ENCODE measurements at regions of chr2 and their contacts with region 1.

Region 1: DNA sequence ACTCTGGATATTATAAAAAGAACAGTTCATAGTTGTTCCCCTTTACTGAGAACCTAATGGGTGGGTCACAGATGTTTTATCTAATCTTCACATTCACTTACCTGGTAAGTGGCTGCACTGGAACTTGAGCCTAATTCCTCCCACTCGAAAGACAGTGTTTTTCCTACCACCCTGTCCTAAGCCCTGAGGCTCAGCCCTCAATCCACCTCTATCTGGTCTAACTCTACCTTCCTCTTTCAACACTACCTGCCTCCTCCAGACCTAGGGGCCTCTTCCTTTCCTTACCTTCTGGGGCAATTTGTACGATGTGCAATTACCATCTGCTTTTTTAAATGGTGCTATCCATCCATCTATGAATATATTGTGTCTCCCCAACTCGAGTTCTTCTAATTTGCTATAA is 9.7 kb upstream of the KIF3C start:
- DNase-seq: no peak
- ATAC-seq: no peak
- H3K4me3 Mint-ChIP-seq: no peak overlapping the region
- H3K27ac Mint-ChIP-seq: no peak overlapping the region
- H3K4me1 Mint-ChIP-seq: peaks cover 6% of the 10 kb centered on the region
- H3K27me3 Mint-ChIP-seq: no peaks in the 10 kb centered on the region
- CTCF ChIP-seq: no peak

Region 2: DNA sequence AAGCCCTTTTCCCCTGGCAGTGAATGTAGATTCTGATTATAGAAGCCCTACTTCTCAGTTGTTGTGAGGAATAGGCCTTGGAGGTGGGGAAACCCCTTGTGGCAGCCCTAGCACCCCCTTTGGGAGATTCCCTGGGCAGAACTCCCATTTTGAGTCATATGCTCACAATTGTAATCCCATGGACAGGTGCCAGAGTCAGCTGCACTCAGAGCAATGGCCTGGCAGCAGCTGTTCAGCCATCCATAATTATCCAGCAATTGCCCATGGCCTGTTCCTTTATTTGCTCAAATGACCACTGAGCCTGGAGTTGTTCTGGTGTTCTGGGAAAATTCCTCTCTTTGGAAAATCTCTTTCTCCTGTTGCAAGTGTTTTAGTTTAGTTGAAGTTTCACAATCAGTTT is 1270.5 kb before region 1 on chr2:
- CTCF ChIA-PET with region 1: no interaction called
- POLR2A ChIA-PET with region 1: interaction called, 11 read pairs
- intact Hi-C with region 1: no loop called
- DNase-seq: no peak
- ATAC-seq: no peak
- H3K4me3 Mint-ChIP-seq: no peak overlapping the region
- H3K27ac Mint-ChIP-seq: no peak overlapping the region
- H3K4me1 Mint-ChIP-seq: peaks cover 29% of the 10 kb centered on the region
- H3K27me3 Mint-ChIP-seq: no peaks in the 10 kb centered on the region
- CTCF ChIP-seq: no peak

Region 3: DNA sequence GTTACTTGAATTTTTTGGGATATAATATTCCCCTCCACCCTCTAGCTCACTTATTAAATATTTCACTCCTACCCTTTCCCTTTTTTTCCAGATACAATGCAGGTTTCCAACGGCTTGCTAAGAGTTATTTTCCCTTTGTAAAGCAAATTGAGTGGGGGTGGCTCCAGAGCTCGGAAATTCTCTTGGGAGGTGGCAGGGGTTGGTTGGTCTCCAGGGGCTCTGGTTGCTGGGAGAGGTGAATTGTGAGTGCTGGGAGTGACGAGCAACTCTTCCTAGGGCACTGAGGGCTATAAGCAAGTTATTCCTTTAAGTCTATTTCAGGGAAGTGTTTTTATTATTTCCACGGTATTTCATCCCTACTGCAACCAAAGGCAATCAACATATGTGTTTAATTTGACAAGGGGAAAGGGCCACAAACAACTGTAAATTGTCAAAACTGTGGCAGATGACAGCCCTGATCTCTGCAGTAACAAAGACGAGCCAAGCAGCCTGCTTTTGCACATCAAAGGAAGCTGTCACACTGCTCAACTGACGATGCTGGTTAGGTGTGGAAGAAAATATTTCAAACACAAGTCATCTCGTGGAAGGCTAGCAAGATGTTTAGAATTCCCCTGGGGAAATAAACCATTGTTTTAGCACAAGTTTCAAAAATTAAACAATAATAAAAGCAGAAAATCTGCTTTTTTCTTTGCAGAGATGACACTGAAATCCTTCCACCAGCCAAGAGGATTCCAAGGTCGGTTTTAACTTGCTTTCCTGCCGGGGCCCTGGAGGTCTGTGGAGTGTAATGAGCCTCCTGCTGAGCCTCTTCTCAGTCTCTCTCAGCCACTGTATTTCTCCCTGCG is 78.9 kb before region 1 on chr2:
- CTCF ChIA-PET with region 1: no interaction called
- POLR2A ChIA-PET with region 1: no interaction called
- intact Hi-C with region 1: no loop called
- DNase-seq: no peak
- ATAC-seq: no peak
- H3K4me3 Mint-ChIP-seq: no peak overlapping the region
- H3K27ac Mint-ChIP-seq: no peak overlapping the region
- H3K4me1 Mint-ChIP-seq: peaks cover 7% of the 10 kb centered on the region
- H3K27me3 Mint-ChIP-seq: peaks cover 4% of the 10 kb centered on the region
- CTCF ChIP-seq: no peak

Region 4: GRCh38 chr2:25941042-25941441 is 50.9 kb before region 1 on chr2:
- CTCF ChIA-PET with region 1: no interaction called
- POLR2A ChIA-PET with region 1: no interaction called
- intact Hi-C with region 1: no loop called
- DNase-seq: no peak
- ATAC-seq: no peak
- H3K4me3 Mint-ChIP-seq: no peak overlapping the region
- H3K27ac Mint-ChIP-seq: no peak overlapping the region
- H3K4me1 Mint-ChIP-seq: no peaks in the 10 kb centered on the region
- H3K27me3 Mint-ChIP-seq: no peaks in the 10 kb centered on the region
- CTCF ChIP-seq: no peak

Region 5: DNA sequence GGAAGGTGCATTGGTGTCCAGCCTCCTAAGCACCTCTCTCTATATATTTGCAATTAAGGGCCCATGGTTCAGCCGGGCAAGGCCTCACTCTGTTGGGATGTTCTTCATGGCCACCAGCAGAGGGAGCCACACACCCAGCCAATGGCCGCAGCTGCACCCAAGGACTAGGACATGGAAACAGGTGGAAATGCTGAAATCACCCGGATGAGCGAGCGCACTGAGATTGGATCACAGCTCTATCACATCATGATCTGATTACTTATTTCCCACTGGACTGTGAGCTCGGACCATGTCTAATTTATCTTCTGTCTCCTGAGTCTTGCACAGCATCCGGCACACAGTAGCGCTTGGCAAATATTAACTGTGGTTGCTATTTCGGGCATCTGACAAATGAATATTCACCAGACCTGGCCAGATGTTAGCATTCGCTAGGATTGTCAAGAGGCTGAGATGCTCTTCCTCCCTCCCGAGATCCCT is 40.9 kb before region 1 on chr2:
- CTCF ChIA-PET with region 1: interaction called, 8 read pairs
- POLR2A ChIA-PET with region 1: no interaction called
- intact Hi-C with region 1: loop called (anchors 2 kb)
- DNase-seq: peak; percentile 51
- ATAC-seq: peak; percentile 86
- H3K4me3 Mint-ChIP-seq: no peak overlapping the region
- H3K27ac Mint-ChIP-seq: no peak overlapping the region
- H3K4me1 Mint-ChIP-seq: no peaks in the 10 kb centered on the region
- H3K27me3 Mint-ChIP-seq: no peaks in the 10 kb centered on the region
- CTCF ChIP-seq: peak; percentile 68

Region 6: GRCh38 chr2:26144953-26145680 is 153.2 kb after region 1 on chr2:
- CTCF ChIA-PET with region 1: interaction called, 24 read pairs
- POLR2A ChIA-PET with region 1: interaction called, 3 read pairs
- intact Hi-C with region 1: loop called (anchors 1 kb)
- DNase-seq: peak; percentile 25
- ATAC-seq: peak; percentile 77
- H3K4me3 Mint-ChIP-seq: peak overlapping the region; percentile 46
- H3K27ac Mint-ChIP-seq: no peak overlapping the region
- H3K4me1 Mint-ChIP-seq: peaks cover 4% of the 10 kb centered on the region
- H3K27me3 Mint-ChIP-seq: peaks cover 10% of the 10 kb centered on the region
- CTCF ChIP-seq: no peak

Region 7: DNA sequence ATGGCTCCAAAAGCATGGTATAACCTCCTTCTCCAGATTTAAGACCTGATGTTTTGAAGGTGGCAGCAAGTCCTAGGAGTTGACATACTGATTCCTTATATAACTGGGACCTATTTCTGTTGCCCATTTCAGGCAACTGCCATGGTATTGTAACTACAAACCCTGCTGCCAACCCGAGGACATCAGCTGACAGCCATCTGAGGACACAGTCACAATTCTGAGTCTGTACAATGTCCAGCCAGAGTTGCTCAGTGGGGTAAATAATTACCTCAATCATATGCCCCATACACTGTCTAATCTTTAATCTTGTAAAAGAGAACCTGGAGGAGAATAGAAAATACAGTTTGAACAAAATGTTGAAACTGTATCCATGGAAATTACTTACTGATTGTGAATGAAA is 172.3 kb after region 1 on chr2:
- CTCF ChIA-PET with region 1: no interaction called
- POLR2A ChIA-PET with region 1: interaction called, 15 read pairs
- intact Hi-C with region 1: no loop called
- DNase-seq: no peak
- ATAC-seq: no peak
- H3K4me3 Mint-ChIP-seq: no peak overlapping the region
- H3K27ac Mint-ChIP-seq: no peak overlapping the region
- H3K4me1 Mint-ChIP-seq: no peaks in the 10 kb centered on the region
- H3K27me3 Mint-ChIP-seq: peaks cover 3% of the 10 kb centered on the region
- CTCF ChIP-seq: no peak

Region 8: DNA sequence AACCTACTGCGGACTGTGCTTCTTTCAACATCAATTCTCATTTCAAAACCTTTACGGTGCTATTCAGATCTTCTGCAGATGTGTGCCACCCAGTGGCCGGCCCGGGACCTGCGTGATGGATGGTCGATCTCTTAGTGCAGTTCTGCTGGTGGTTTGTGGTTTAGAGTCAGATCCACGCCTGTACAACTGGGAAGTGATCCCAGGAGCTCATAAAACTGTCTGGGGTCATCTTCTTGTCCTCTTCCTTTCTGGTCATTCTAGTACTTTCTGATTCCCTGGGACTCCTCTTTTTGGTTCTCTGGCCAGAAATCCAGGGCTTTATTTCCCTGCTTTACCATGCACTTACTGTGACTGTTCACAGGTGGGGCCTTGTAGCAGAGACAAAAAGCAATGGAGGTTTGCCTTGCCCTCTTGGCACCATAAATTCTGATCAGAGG is 338.2 kb after region 1 on chr2:
- CTCF ChIA-PET with region 1: interaction called, 4 read pairs
- POLR2A ChIA-PET with region 1: no interaction called
- intact Hi-C with region 1: loop called (anchors 1 kb)
- DNase-seq: peak; percentile 66
- ATAC-seq: peak; percentile 99
- H3K4me3 Mint-ChIP-seq: no peak overlapping the region
- H3K27ac Mint-ChIP-seq: no peak overlapping the region
- H3K4me1 Mint-ChIP-seq: peaks cover 6% of the 10 kb centered on the region
- H3K27me3 Mint-ChIP-seq: no peaks in the 10 kb centered on the region
- CTCF ChIP-seq: peak; percentile 81

Region 9: GRCh38 chr2:26577434-26578112 is 585.6 kb after region 1 on chr2:
- CTCF ChIA-PET with region 1: no interaction called
- POLR2A ChIA-PET with region 1: no interaction called
- intact Hi-C with region 1: loop called (anchors 1 kb)
- DNase-seq: peak; percentile 49
- ATAC-seq: peak; percentile 84
- H3K4me3 Mint-ChIP-seq: no peak overlapping the region
- H3K27ac Mint-ChIP-seq: no peak overlapping the region
- H3K4me1 Mint-ChIP-seq: no peaks in the 10 kb centered on the region
- H3K27me3 Mint-ChIP-seq: peaks cover 30% of the 10 kb centered on the region
- CTCF ChIP-seq: no peak

Measured in activated B cell treated with CpG ODN at 0.5 μM for 24 hours (primary cell).